ENCODE measurements at regions of chr3 and their contacts with region 1.

Region 1: GRCh38 chr3:190321789-190322603 is at the start of gene CLDN1:
- DNase-seq: peak; percentile 69
- ATAC-seq: peak; percentile 93
- H3K4me3 ChIP-seq: peak within 1 kb of the TSS; percentile 66
- H3K27ac ChIP-seq: peak within 1 kb of the TSS; percentile 3; the same call in 1 of the 2 replicates
- H3K4me1 ChIP-seq: peaks cover 14% of the 10 kb centered on the region
- H3K27me3 ChIP-seq: no peaks in the 10 kb centered on the region
- CTCF ChIP-seq: peak; percentile 95
- POLR2A ChIP-seq: peak; percentile 63; the same call in 1 of the 2 replicates
- RAD21 ChIP-seq: peak; percentile 81
- total RNA-seq, gene CLDN1: 4.7 and 7.2 TPM in 2 replicates

Region 2: GRCh38 chr3:190384241-190384863 is 62.4 kb after region 1 on chr3:
- CTCF ChIA-PET with region 1: interaction called, 9 read pairs
- POLR2A ChIA-PET with region 1: no interaction called
- dilution Hi-C with region 1: no loop called
- in situ Hi-C with region 1: no loop called
- intact Hi-C with region 1: loop called (anchors 2 kb)
- DNase-seq: peak; percentile 69
- ATAC-seq: peak; percentile 21; the same call in 1 of the 2 replicates
- H3K4me3 ChIP-seq: no peak overlapping the region
- H3K27ac ChIP-seq: no peak overlapping the region
- H3K4me1 ChIP-seq: peaks cover 5% of the 10 kb centered on the region
- H3K27me3 ChIP-seq: no peaks in the 10 kb centered on the region
- CTCF ChIP-seq: peak; percentile 62
- POLR2A ChIP-seq: no peak
- RAD21 ChIP-seq: peak; percentile 62

Region 3: GRCh38 chr3:190424478-190425439 is 102.8 kb after region 1 on chr3:
- CTCF ChIA-PET with region 1: interaction called, 9 read pairs
- POLR2A ChIA-PET with region 1: no interaction called
- dilution Hi-C with region 1: no loop called
- in situ Hi-C with region 1: no loop called
- intact Hi-C with region 1: loop called (anchors 1 kb)
- DNase-seq: peak; percentile 76
- ATAC-seq: peak; percentile 75
- H3K4me3 ChIP-seq: no peak overlapping the region
- H3K27ac ChIP-seq: no peak overlapping the region
- H3K4me1 ChIP-seq: no peaks in the 10 kb centered on the region
- H3K27me3 ChIP-seq: no peaks in the 10 kb centered on the region
- CTCF ChIP-seq: peak; percentile 75
- POLR2A ChIP-seq: no peak
- RAD21 ChIP-seq: peak; percentile 81

Measured in IMR-90 (cell line).